ENCODE measurements at regions of chr20 and their contacts with region 1.

Region 1: GRCh38 chr20:10090588-10091166 is 55.9 kb downstream of the ANKEF1 start:
- DNase-seq: no peak
- H3K4me3 ChIP-seq: no peak overlapping the region
- H3K27ac ChIP-seq: no peak overlapping the region
- H3K4me1 ChIP-seq: no peaks in the 10 kb centered on the region
- H3K27me3 ChIP-seq: no peaks in the 10 kb centered on the region
- CTCF ChIP-seq: peak; percentile 80

Region 2: DNA sequence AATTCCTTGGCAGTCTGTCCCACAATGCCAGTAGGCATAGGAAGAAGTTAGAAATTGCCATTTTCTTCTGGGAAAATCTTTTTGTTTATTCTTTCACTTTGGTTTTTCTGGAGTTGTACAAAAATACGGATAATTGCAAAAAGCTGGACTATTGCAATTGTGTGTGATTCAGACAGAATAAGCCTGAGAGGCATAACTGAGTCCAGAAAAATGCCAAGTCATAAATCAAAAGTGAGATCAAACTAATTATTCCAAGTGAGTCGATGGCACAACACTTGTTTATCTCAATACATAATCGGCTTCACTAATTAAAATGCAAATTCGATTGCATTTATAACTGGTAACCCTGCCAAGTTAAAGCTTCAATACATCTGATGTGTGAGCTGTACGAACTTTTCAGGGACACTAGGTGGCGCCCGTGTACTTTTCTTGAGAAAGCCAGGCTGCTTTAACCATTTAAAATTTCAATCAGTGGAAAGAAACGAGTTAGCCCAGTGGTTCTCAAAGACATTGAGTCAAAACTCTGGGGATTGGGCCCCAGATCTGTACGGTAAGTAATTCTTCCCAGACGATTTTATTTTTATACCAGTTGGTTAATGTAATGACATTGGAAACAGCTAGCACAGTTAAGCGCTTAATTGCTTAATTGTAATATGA is 473.7 kb before region 1 on chr20:
- intact Hi-C with region 1: loop called (anchors 5 kb)
- DNase-seq: peak; percentile 36
- H3K4me3 ChIP-seq: no peak overlapping the region
- H3K27ac ChIP-seq: no peak overlapping the region
- H3K4me1 ChIP-seq: no peaks in the 10 kb centered on the region
- H3K27me3 ChIP-seq: peaks cover 57% of the 10 kb centered on the region
- CTCF ChIP-seq: peak; percentile 85

Region 3: GRCh38 chr20:9978397-9979004 is 112.2 kb before region 1 on chr20:
- intact Hi-C with region 1: loop called (anchors 5 kb)
- DNase-seq: no peak
- H3K4me3 ChIP-seq: no peak overlapping the region
- H3K27ac ChIP-seq: no peak overlapping the region
- H3K4me1 ChIP-seq: no peaks in the 10 kb centered on the region
- H3K27me3 ChIP-seq: peaks cover 12% of the 10 kb centered on the region
- CTCF ChIP-seq: peak; percentile 79